ENCODE measurements at regions of chr6 and their contacts with region 1.

Region 1: GRCh38 chr6:144215932-144216667 is 65.8 kb downstream of the STX11 start:
- DNase-seq: peak; percentile 93
- H3K4me3 Mint-ChIP-seq: peak overlapping the region; percentile 79
- H3K27ac Mint-ChIP-seq: peak overlapping the region; percentile 96
- H3K4me1 Mint-ChIP-seq: peaks cover 31% of the 10 kb centered on the region
- H3K27me3 Mint-ChIP-seq: peaks cover 2% of the 10 kb centered on the region

Region 2: GRCh38 chr6:143792402-143793279 is 423.5 kb before region 1 on chr6:
- CTCF ChIA-PET with region 1: no interaction called
- intact Hi-C with region 1: no loop called
- DNase-seq: no peak
- H3K4me3 Mint-ChIP-seq: no peak overlapping the region
- H3K27ac Mint-ChIP-seq: no peak overlapping the region
- H3K4me1 Mint-ChIP-seq: no peaks in the 10 kb centered on the region
- H3K27me3 Mint-ChIP-seq: no peaks in the 10 kb centered on the region

Region 3: GRCh38 chr6:143842902-143843676 is 373.0 kb before region 1 on chr6 and contains the start of gene LTV1:
- CTCF ChIA-PET with region 1: no interaction called
- intact Hi-C with region 1: loop called (anchors 2 kb)
- DNase-seq: peak; percentile 96
- H3K4me3 Mint-ChIP-seq: peak within 1 kb of the TSS; percentile 93
- H3K27ac Mint-ChIP-seq: peak within 1 kb of the TSS; percentile 94
- H3K4me1 Mint-ChIP-seq: peaks cover 28% of the 10 kb centered on the region
- H3K27me3 Mint-ChIP-seq: no peaks in the 10 kb centered on the region
- total RNA-seq, gene LTV1: 22.8 to 23.3 TPM

Region 4: GRCh38 chr6:144063744-144064401 is 152.2 kb before region 1 on chr6:
- CTCF ChIA-PET with region 1: no interaction called
- intact Hi-C with region 1: loop called (anchors 1 kb)
- DNase-seq: peak; percentile 86
- H3K4me3 Mint-ChIP-seq: peak overlapping the region; percentile 75
- H3K27ac Mint-ChIP-seq: peak overlapping the region; percentile 43
- H3K4me1 Mint-ChIP-seq: peaks cover 40% of the 10 kb centered on the region
- H3K27me3 Mint-ChIP-seq: no peaks in the 10 kb centered on the region

Region 5: GRCh38 chr6:144131248-144131709 is 84.8 kb before region 1 on chr6:
- CTCF ChIA-PET with region 1: interaction called, 6 read pairs
- intact Hi-C with region 1: loop called (anchors 1 kb)
- DNase-seq: no peak
- H3K4me3 Mint-ChIP-seq: peak overlapping the region; percentile 57
- H3K27ac Mint-ChIP-seq: peak overlapping the region; percentile 92
- H3K4me1 Mint-ChIP-seq: peaks cover 52% of the 10 kb centered on the region
- H3K27me3 Mint-ChIP-seq: peaks cover 3% of the 10 kb centered on the region

Region 6: GRCh38 chr6:144284783-144285547 is 68.9 kb after region 1 on chr6 and contains the start of gene UTRN:
- CTCF ChIA-PET with region 1: no interaction called
- intact Hi-C with region 1: loop called (anchors 1 kb)
- DNase-seq: peak; percentile 64
- H3K4me3 Mint-ChIP-seq: peak within 1 kb of the TSS; percentile 86
- H3K27ac Mint-ChIP-seq: no peak within 1 kb of the TSS
- H3K4me1 Mint-ChIP-seq: peaks cover 12% of the 10 kb centered on the region
- H3K27me3 Mint-ChIP-seq: peaks cover 21% of the 10 kb centered on the region
- total RNA-seq, gene UTRN: 35.3 to 39.9 TPM